ENCODE measurements at regions of chr3 and their contacts with region 1.

Region 1: DNA sequence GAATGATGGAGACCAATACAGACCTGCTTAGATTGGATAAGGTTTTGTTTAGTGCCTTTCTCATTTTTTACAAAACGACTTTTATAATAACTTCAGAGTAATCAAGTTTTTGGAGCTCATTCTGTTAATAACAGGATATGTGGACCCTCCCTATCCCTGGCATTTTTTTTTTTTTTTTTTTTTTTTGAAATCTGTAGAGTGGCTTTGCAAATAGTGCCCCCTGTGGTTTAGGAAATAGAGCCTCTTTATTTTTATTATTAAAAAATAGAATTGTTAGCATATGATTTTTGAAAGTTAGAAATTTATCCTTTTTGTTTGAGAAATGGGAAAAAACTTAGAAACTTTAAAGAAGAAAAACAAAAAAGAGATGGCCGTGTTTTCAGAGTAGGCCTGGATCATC is 11.4 kb downstream of the SKIL start:
- DNase-seq: peak in 2 of 5 donors; percentile 15 to 19
- H3K4me3 ChIP-seq: no peak overlapping the region
- H3K4me3 Mint-ChIP-seq: no peak overlapping the region
- H3K27ac ChIP-seq: no peak overlapping the region
- H3K27ac Mint-ChIP-seq: peak overlapping the region in 1 of 7 donors; percentile 15
- H3K4me1 ChIP-seq: peaks cover 15% of the 10 kb centered on the region
- H3K4me1 Mint-ChIP-seq: peaks cover 18 to 28% (median 23%) of the 10 kb centered on the region in 4 donors
- H3K27me3 ChIP-seq: no peaks in the 10 kb centered on the region
- H3K27me3 Mint-ChIP-seq: no peaks in the 10 kb centered on the region

Region 2: DNA sequence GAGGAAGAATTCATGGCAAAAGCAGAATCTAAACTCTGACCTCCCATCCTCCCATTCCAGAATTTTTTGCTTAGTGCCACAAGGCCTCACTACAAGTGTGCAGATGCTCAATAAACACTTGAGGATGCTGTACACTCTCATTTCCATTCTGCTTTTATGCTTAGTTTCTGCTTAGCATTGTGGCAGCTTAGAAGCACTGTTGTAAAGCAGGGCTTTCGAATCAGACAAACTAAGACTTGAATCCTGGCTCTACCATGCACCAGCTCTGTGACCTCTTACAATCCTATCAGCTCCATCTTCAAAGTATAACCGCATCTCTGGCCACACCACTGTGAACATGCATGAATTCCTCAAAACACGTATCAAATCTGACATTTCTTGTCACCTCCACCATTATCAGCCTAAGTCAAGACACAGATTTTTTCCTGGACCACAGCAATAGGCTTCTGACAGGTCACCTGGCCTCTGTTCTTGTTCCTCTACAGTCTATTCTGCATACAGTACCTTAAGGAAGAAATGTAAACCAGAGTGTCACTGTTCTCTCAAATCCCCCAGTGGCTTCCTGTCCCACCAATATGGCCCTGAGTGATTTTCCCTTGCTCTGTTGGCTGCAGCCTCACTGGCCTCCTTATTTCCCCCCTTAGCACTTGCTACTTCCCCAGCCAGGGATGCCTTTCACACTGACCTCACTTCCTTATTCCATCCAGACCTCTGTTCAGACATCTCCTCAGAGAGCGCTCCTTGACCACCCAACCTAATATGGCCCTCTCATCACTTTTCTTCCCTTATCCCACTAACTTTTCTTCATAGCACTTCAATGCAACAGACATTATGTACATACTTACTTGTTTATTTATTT is 179.3 kb before region 1 on chr3:
- CTCF ChIA-PET with region 1: interaction called, 11 read pairs
- POLR2A ChIA-PET with region 1: no interaction called
- intact Hi-C with region 1: loop called (anchors 1 kb)
- DNase-seq: no peak
- H3K4me3 ChIP-seq: no peak overlapping the region
- H3K4me3 Mint-ChIP-seq: peak overlapping the region in 3 of 8 donors; percentile 21 to 49 (median 22)
- H3K27ac ChIP-seq: no peak overlapping the region
- H3K27ac Mint-ChIP-seq: no peak overlapping the region
- H3K4me1 ChIP-seq: no peaks in the 10 kb centered on the region
- H3K4me1 Mint-ChIP-seq: peaks cover 8 to 11% (median 9%) of the 10 kb centered on the region in 4 donors
- H3K27me3 ChIP-seq: no peaks in the 10 kb centered on the region
- H3K27me3 Mint-ChIP-seq: peaks cover 0 to 1% of the 10 kb centered on the region in 2 donors

Region 3: DNA sequence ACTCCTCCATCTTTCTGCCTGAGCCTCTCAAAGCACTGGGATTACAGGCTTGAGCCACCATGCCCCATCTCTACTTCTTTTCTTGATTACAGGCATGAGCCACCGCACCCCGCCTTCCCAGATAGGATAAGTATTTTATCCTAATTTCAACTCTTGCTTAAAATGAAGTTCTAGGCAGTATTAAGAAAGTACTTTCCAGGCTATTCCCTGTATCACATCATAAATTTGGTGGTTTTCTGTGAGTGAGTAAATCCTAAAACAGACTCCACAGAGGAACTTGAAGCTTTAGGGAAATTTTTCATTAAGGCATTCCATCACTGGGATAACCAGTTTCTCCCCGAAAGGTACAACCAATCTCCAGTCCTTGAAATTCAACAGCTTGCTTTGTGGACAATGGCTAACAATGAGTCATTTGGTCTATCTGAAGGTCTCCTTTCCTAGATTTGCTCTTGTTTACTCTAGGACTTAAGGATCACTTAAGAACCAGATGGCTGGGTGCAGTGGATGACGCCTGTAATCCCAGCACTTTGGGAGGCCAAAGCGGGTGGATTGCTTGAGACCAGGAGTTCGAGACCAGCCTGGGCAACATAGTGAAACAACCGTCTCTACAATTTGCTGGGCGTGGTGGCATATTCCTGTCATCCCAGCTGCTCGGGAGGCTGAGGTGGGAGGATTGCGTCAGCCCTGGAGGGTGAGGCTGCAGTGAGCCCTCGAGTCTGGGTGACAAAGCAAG is 61.1 kb before region 1 on chr3:
- CTCF ChIA-PET with region 1: interaction called, 17 read pairs
- POLR2A ChIA-PET with region 1: no interaction called
- intact Hi-C with region 1: loop called (anchors 1 kb)
- DNase-seq: no peak
- H3K4me3 ChIP-seq: no peak overlapping the region
- H3K4me3 Mint-ChIP-seq: no peak overlapping the region
- H3K27ac ChIP-seq: no peak overlapping the region
- H3K27ac Mint-ChIP-seq: no peak overlapping the region
- H3K4me1 ChIP-seq: no peaks in the 10 kb centered on the region
- H3K4me1 Mint-ChIP-seq: peaks cover 0 to 1% (median 0%) of the 10 kb centered on the region in 4 donors
- H3K27me3 ChIP-seq: no peaks in the 10 kb centered on the region
- H3K27me3 Mint-ChIP-seq: no peaks in the 10 kb centered on the region

Region 4: DNA sequence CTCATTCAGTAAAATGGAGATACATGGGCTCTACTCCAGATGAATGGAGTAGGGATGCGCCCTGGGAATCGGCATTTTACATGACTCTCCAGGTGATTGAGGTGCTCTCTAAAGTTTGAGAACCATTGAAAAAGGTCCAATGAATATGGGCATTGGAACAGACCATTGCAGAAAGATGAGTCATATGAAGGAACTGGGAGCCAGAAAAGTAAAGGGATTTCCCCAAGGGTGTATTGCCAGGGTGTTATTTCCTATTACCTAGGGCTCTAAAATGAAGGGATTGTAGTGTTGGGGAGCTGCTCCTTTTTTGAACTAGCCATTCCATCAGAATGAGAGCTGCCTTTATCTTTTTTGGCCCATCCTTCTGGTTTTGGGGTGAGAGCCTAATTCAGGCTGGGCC is 71.4 kb after region 1 on chr3:
- CTCF ChIA-PET with region 1: no interaction called
- POLR2A ChIA-PET with region 1: no interaction called
- intact Hi-C with region 1: no loop called
- DNase-seq: no peak
- H3K4me3 ChIP-seq: no peak overlapping the region
- H3K4me3 Mint-ChIP-seq: no peak overlapping the region
- H3K27ac ChIP-seq: no peak overlapping the region
- H3K27ac Mint-ChIP-seq: no peak overlapping the region
- H3K4me1 ChIP-seq: no peaks in the 10 kb centered on the region
- H3K4me1 Mint-ChIP-seq: no peaks in the 10 kb centered on the region
- H3K27me3 ChIP-seq: no peaks in the 10 kb centered on the region
- H3K27me3 Mint-ChIP-seq: peaks cover 15 to 16% of the 10 kb centered on the region in 2 donors